ENCODE measurements at regions of chr16 and their contacts with region 1.

Region 1: DNA sequence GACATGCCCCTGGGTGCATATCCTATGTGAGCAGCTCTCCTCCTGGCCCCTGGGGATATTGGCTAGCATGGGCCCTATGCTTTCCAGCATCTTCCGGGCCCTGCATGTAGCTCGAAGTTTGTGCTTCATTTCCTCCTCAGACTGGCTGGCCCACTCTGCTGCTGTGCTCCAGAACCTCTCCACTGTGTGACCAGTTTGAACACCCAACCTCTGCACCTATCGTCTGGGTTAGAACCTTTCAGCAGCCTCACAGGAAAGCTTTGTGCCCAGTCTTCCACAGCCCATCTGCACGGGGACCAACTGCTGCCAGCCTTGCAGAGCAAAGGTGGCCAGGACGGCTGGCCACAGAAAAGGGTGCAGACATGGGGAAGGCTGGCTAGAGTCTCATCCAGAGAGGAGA is 10.2 kb upstream of the CLEC18B start:
- DNase-seq: no peak
- H3K4me3 Mint-ChIP-seq: no peak overlapping the region
- H3K27ac Mint-ChIP-seq: peak overlapping the region; percentile 59
- H3K4me1 Mint-ChIP-seq: peaks cover 7% of the 10 kb centered on the region
- H3K27me3 Mint-ChIP-seq: no peaks in the 10 kb centered on the region
- CTCF ChIP-seq: no peak

Region 2: DNA sequence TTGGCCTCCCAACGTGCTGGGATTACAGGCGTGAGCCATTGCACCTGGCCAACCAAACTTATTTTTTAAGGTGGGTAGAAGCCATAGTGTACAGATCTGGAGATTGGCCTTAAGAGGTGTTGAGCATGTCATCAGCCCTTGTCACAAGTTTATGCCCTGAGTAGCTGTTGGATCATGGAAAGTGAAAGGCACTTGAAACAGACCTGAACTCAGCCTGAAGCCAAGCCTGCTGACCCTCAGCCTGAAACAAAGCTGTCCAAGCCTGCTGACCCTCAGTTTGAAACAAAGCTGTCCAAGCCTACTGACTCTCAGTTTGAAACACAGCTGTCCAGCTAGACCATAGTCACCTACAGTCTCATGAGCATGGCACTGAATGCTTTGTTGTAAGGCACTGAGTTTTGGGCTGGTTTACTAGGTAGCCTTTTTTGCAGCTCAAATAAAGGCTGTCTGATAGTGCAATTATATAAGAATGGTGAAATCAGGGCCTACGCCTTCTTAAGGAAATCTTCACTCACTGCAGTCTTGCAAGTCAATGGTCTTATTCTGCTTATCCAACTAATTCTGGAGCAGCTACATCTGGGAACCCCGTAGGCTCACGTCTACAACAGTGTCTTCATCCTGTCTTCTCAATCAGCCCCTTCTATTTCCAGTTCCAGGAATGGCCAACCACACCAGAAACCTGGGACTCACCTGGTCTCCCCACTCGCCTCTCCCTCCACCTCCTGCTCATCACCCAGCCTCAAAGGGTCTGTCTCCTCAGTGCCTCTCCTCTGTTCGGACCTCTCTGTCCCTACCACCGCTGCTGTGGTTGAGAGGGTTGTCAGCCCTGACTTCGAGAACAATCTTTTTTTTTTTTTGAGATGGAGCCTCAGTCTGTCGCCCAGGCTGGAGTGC is 58.3 kb before region 1 on chr16:
- CTCF ChIA-PET with region 1: no interaction called
- POLR2A ChIA-PET with region 1: interaction called, 4 read pairs
- intact Hi-C with region 1: loop called (anchors 5 kb)
- DNase-seq: no peak
- H3K4me3 Mint-ChIP-seq: no peak overlapping the region
- H3K27ac Mint-ChIP-seq: no peak overlapping the region
- H3K4me1 Mint-ChIP-seq: no peaks in the 10 kb centered on the region
- H3K27me3 Mint-ChIP-seq: no peaks in the 10 kb centered on the region
- CTCF ChIP-seq: no peak

Measured in MCF 10A (cell line).